Ovary (tissue), 10 donors: ENCODE measurements at regions of chr9 and their contacts with region 1.

Region 1: DNA sequence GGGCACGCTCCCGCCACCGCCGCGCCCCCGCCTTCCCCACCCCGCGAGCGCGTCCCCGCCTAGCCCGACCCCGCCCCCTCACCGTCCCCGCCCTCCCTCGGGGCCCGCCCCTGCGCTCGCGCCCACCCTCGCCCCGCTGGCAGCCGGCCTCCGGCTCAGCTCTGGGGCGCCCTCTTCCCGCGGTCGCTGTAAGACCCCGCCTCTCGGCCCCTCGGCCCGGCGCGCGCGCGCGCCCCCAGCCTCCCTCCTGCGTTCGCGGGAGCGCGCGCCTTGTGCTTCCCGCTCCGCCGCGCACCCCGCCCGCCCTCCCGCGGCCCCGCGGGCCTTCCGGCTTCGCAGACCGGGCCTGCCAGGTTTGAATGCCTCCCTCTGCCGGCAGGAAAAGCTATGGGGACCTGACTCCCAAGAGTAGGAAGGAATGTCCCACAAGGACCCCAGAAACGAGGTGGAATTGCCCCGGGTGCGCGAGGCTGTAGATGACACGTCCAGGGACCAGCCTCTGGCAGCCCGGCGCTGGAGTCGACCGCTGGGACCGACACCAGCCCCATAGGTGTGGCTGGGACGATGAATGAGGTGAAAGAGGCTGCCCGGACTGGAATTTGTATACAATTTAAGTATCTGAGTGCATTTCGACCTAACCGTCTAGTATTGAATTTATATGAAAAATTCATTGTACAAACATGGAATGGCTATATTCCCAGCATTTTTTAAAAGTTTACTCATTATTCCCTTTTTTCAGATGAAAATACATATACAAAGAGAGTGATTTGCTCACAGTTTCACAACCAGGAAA is 416 bp upstream of the PTBP3 start:
- DNase-seq: peak; percentile 94 to 98 (median 96)
- H3K4me3 ChIP-seq: peak overlapping the region; percentile 95
- H3K27ac ChIP-seq: peak overlapping the region; percentile 93 to 99
- H3K4me1 ChIP-seq: no peaks in the 10 kb centered on the region
- H3K27me3 ChIP-seq: no peaks in the 10 kb centered on the region
- CTCF ChIP-seq: peak; percentile 47 to 58 (median 53)
- EP300 ChIP-seq: no peak
- POLR2A ChIP-seq: no peak

Region 2: GRCh38 chr9:111839388-111839787 is 494.4 kb before region 1 on chr9:
- intact Hi-C with region 1: no loop called
- DNase-seq: no peak
- H3K4me3 ChIP-seq: no peak overlapping the region
- H3K27ac ChIP-seq: no peak overlapping the region
- H3K4me1 ChIP-seq: no peaks in the 10 kb centered on the region
- H3K27me3 ChIP-seq: no peaks in the 10 kb centered on the region
- CTCF ChIP-seq: no peak
- EP300 ChIP-seq: no peak
- POLR2A ChIP-seq: no peak

Region 3: GRCh38 chr9:112166172-112167140 is 167.4 kb before region 1 on chr9:
- intact Hi-C with region 1: loop called in 1 of 4 experiments (anchors 5 kb)
- DNase-seq: peak in 2 of 5 donors; percentile 18 to 20
- H3K4me3 ChIP-seq: no peak overlapping the region
- H3K27ac ChIP-seq: no peak overlapping the region
- H3K4me1 ChIP-seq: no peaks in the 10 kb centered on the region
- H3K27me3 ChIP-seq: no peaks in the 10 kb centered on the region
- CTCF ChIP-seq: no peak
- EP300 ChIP-seq: no peak
- POLR2A ChIP-seq: no peak